CD8-positive, alpha-beta T cell (primary cell): ENCODE measurements at regions of chr3 and their contacts with region 1.

Region 1: DNA sequence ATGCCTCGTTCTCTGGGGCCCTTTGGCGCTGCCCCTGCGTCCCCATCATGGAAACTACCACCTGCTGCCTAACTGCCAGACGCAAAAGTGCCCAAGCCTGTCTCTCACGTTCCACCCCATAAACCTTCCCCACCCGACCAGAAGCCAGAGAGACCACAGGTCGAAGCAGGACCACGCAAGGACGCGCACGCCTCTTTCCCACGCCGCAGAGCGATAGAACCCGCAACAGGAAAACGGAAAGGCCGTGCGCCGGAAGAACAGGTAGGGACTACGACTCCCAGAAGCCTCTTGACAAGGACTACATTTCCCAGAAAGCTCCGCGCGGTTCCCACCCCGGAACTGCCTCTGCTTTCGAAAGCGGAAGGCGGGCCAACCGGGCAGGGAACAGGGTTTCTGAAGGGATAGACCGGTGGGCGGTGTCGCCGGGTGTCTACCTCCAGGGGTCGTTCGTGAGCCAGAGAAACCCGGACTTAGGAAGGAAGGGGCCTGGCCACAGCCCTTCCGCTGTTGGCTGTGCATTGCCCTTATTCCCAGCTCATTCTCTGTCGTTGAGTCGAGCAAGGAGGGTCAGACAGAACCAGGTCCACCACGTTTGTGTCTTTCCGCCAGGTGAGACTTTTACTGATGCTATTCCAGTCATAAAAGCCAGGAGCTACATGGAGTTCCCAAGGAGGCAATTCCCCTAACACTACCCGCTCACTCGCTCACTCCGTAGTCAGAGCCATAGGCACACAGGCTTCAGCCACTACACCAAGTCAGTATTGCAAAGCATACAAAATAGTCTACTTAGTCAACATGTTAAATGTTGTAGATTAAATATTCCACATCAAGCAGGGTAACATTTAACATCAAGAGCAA is 56.6 kb upstream of the ZBTB38 start:
- DNase-seq: peak; percentile 93 to 98 (median 98)
- ATAC-seq: peak; percentile 93
- H3K4me3 ChIP-seq: peak overlapping the region; percentile 82 to 87
- H3K4me3 Mint-ChIP-seq: peak overlapping the region; percentile 93
- H3K27ac ChIP-seq: peak overlapping the region; percentile 61 to 84
- H3K27ac Mint-ChIP-seq: peak overlapping the region; percentile 96
- H3K4me1 ChIP-seq: peaks cover 43% of the 10 kb centered on the region
- H3K4me1 Mint-ChIP-seq: peaks cover 53% of the 10 kb centered on the region
- H3K27me3 ChIP-seq: no peaks in the 10 kb centered on the region
- H3K27me3 Mint-ChIP-seq: no peaks in the 10 kb centered on the region
- CTCF ChIP-seq: peak; percentile 60

Region 2: DNA sequence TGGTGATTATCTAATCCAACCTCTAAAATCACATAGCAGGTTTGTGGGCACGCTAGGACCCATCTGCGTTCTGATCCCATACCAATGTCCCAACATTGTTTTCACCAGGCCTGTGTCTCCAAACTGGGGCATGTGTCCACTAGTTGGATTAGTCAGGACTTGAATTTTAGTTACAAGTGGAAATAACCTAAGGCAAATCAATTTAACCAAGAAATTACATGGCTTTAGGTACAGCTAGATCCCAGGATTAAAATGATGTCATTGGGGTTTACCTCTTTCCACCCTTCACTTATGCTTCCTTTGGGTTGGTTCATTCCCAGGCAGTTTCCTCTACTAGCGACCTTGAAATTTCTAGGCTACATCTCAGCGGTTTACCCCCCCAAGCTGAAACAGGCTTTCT is 127.3 kb before region 1 on chr3:
- CTCF ChIA-PET with region 1: no interaction called
- POLR2A ChIA-PET with region 1: no interaction called
- intact Hi-C with region 1: no loop called
- DNase-seq: no peak
- ATAC-seq: no peak
- H3K4me3 ChIP-seq: no peak overlapping the region
- H3K4me3 Mint-ChIP-seq: no peak overlapping the region
- H3K27ac ChIP-seq: no peak overlapping the region
- H3K27ac Mint-ChIP-seq: no peak overlapping the region
- H3K4me1 ChIP-seq: no peaks in the 10 kb centered on the region
- H3K4me1 Mint-ChIP-seq: no peaks in the 10 kb centered on the region
- H3K27me3 ChIP-seq: no peaks in the 10 kb centered on the region
- H3K27me3 Mint-ChIP-seq: no peaks in the 10 kb centered on the region
- CTCF ChIP-seq: no peak

Region 3: DNA sequence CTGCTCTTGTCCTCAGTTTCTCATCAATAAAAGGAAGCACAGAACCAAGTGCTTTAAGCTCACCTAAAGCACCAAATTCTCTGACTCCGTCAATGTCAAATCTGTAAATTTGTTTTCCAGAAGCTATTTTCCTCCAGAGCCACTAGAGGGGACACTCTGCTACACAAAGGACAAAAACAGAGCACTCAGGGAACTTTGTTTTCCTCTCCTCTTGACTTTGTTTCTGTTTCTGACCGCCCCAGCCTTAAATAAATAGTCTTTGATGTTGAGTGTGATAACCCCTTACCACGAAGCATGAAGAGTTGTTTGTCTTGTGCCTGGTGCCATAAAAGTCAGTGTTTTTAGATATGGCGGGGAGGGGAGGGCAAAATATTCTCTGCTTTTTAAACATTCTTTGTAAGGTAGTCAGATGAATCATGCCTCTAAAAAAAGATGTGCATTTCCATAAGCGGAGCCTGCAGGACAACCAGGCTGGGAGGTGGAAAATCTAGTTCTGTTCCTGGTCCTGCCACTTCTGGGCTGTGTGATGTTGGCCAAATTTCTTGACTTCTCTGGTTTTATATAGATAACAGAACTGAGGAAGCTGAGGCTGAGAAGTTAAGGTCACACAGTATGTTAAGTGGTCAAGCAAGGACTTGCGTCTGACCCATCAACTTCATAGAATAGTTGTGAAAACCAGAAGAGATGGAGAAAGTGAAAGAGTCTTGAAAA is 49.3 kb after region 1 on chr3:
- CTCF ChIA-PET with region 1: interaction called, 17 read pairs
- POLR2A ChIA-PET with region 1: interaction called, 14 read pairs
- intact Hi-C with region 1: no loop called
- DNase-seq: peak in 2 of 9 experiments; percentile 60 to 72
- ATAC-seq: peak; percentile 68
- H3K4me3 ChIP-seq: no peak overlapping the region
- H3K4me3 Mint-ChIP-seq: peak overlapping the region; percentile 48
- H3K27ac ChIP-seq: no peak overlapping the region
- H3K27ac Mint-ChIP-seq: no peak overlapping the region
- H3K4me1 ChIP-seq: peaks cover 4% of the 10 kb centered on the region
- H3K4me1 Mint-ChIP-seq: peaks cover 7% of the 10 kb centered on the region
- H3K27me3 ChIP-seq: no peaks in the 10 kb centered on the region
- H3K27me3 Mint-ChIP-seq: no peaks in the 10 kb centered on the region
- CTCF ChIP-seq: peak; percentile 69

Region 4: GRCh38 chr3:141412087-141412935 is 100.6 kb after region 1 on chr3:
- CTCF ChIA-PET with region 1: interaction called, 8 read pairs
- POLR2A ChIA-PET with region 1: interaction called, 12 read pairs
- intact Hi-C with region 1: loop called in 1 of 2 experiments (anchors 1 kb)
- DNase-seq: peak; percentile 27 to 88 (median 55)
- ATAC-seq: peak; percentile 64
- H3K4me3 ChIP-seq: peak overlapping the region; percentile 16 to 24
- H3K4me3 Mint-ChIP-seq: peak overlapping the region; percentile 84
- H3K27ac ChIP-seq: peak overlapping the region; percentile 61 to 80
- H3K27ac Mint-ChIP-seq: peak overlapping the region; percentile 99
- H3K4me1 ChIP-seq: peaks cover 78% of the 10 kb centered on the region
- H3K4me1 Mint-ChIP-seq: peaks cover 86% of the 10 kb centered on the region
- H3K27me3 ChIP-seq: no peaks in the 10 kb centered on the region
- H3K27me3 Mint-ChIP-seq: no peaks in the 10 kb centered on the region
- CTCF ChIP-seq: no peak

Region 5: GRCh38 chr3:141460097-141460704 is 148.5 kb after region 1 on chr3:
- CTCF ChIA-PET with region 1: interaction called, 242 read pairs
- POLR2A ChIA-PET with region 1: interaction called, 4 read pairs
- intact Hi-C with region 1: loop called in 1 of 2 experiments (anchors 1 kb)
- DNase-seq: peak; percentile 77 to 92 (median 88)
- ATAC-seq: peak; percentile 100
- H3K4me3 ChIP-seq: no peak overlapping the region
- H3K4me3 Mint-ChIP-seq: no peak overlapping the region
- H3K27ac ChIP-seq: no peak overlapping the region
- H3K27ac Mint-ChIP-seq: no peak overlapping the region
- H3K4me1 ChIP-seq: no peaks in the 10 kb centered on the region
- H3K4me1 Mint-ChIP-seq: peaks cover 6% of the 10 kb centered on the region
- H3K27me3 ChIP-seq: no peaks in the 10 kb centered on the region
- H3K27me3 Mint-ChIP-seq: peaks cover 2% of the 10 kb centered on the region
- CTCF ChIP-seq: peak; percentile 93

Region 6: GRCh38 chr3:141875374-141875892 is 563.7 kb after region 1 on chr3:
- CTCF ChIA-PET with region 1: no interaction called
- POLR2A ChIA-PET with region 1: no interaction called
- intact Hi-C with region 1: loop called (anchors 1 to 5 kb)
- DNase-seq: peak; percentile 67 to 92 (median 84)
- ATAC-seq: peak; percentile 67
- H3K4me3 ChIP-seq: peak overlapping the region; percentile 71 to 88
- H3K4me3 Mint-ChIP-seq: peak overlapping the region; percentile 88
- H3K27ac ChIP-seq: peak overlapping the region; percentile 76 to 99
- H3K27ac Mint-ChIP-seq: peak overlapping the region; percentile 90
- H3K4me1 ChIP-seq: peaks cover 17% of the 10 kb centered on the region
- H3K4me1 Mint-ChIP-seq: peaks cover 29% of the 10 kb centered on the region
- H3K27me3 ChIP-seq: no peaks in the 10 kb centered on the region
- H3K27me3 Mint-ChIP-seq: no peaks in the 10 kb centered on the region
- CTCF ChIP-seq: peak; percentile 82

Region 7: GRCh38 chr3:143001369-143002082 is 1689.8 kb after region 1 on chr3 and contains the start of gene U2SURP:
- CTCF ChIA-PET with region 1: no interaction called
- POLR2A ChIA-PET with region 1: no interaction called
- intact Hi-C with region 1: loop called (anchors 5 kb)
- DNase-seq: peak; percentile 82 to 97 (median 90)
- ATAC-seq: peak; percentile 93
- H3K4me3 ChIP-seq: peak within 1 kb of the TSS; percentile 81 to 92
- H3K4me3 Mint-ChIP-seq: peak within 1 kb of the TSS; percentile 99
- H3K27ac ChIP-seq: peak within 1 kb of the TSS; percentile 91 to 92
- H3K27ac Mint-ChIP-seq: peak within 1 kb of the TSS; percentile 99
- H3K4me1 ChIP-seq: peaks cover 34% of the 10 kb centered on the region
- H3K4me1 Mint-ChIP-seq: peaks cover 42% of the 10 kb centered on the region
- H3K27me3 ChIP-seq: no peaks in the 10 kb centered on the region
- H3K27me3 Mint-ChIP-seq: no peaks in the 10 kb centered on the region
- CTCF ChIP-seq: no peak
- total RNA-seq, gene U2SURP: 186 TPM